Aorta (tissue), 5 donors: ENCODE measurements at regions of chr10 and their contacts with region 1.

Region 1: GRCh38 chr10:17075533-17076359 is 53.9 kb downstream of the CUBN start:
- DNase-seq: no peak
- ATAC-seq: peak; percentile 84
- H3K4me3 ChIP-seq: peak overlapping the region in 1 of 2 donors; percentile 26
- H3K27ac ChIP-seq: peak overlapping the region; percentile 84 to 90
- H3K4me1 ChIP-seq: peaks cover 2 to 9% of the 10 kb centered on the region in 2 donors
- H3K27me3 ChIP-seq: no peaks in the 10 kb centered on the region

Region 2: GRCh38 chr10:17206210-17206709 is 130.5 kb after region 1 on chr10:
- intact Hi-C with region 1: loop called in 1 of 2 experiments (anchors 5 kb)
- DNase-seq: no peak
- ATAC-seq: no peak
- H3K4me3 ChIP-seq: no peak overlapping the region
- H3K27ac ChIP-seq: peak overlapping the region in 1 of 2 donors; percentile 2
- H3K4me1 ChIP-seq: peaks cover 0 to 4% of the 10 kb centered on the region in 2 donors
- H3K27me3 ChIP-seq: no peaks in the 10 kb centered on the region